ENCODE measurements at regions of chr17 and their contacts with region 1.

Region 1: GRCh38 chr17:42221937-42222745 is 27.8 kb upstream of the GHDC start:
- DNase-seq: peak; percentile 69
- ATAC-seq: peak; percentile 82
- H3K4me3 Mint-ChIP-seq: no peak overlapping the region
- H3K27ac Mint-ChIP-seq: peak overlapping the region; percentile 26
- H3K4me1 Mint-ChIP-seq: peaks cover 2% of the 10 kb centered on the region
- H3K27me3 Mint-ChIP-seq: no peaks in the 10 kb centered on the region

Region 2: GRCh38 chr17:42183741-42184711 is 38.1 kb before region 1 on chr17:
- CTCF ChIA-PET with region 1: interaction called, 10 read pairs
- POLR2A ChIA-PET with region 1: no interaction called
- DNase-seq: peak; percentile 80
- ATAC-seq: peak; percentile 71
- H3K4me3 Mint-ChIP-seq: peak overlapping the region; percentile 82
- H3K27ac Mint-ChIP-seq: peak overlapping the region; percentile 80
- H3K4me1 Mint-ChIP-seq: peaks cover 55% of the 10 kb centered on the region
- H3K27me3 Mint-ChIP-seq: peaks cover 27% of the 10 kb centered on the region

Region 3: GRCh38 chr17:42240212-42240884 is 18.2 kb after region 1 on chr17:
- CTCF ChIA-PET with region 1: interaction called, 32 read pairs
- POLR2A ChIA-PET with region 1: no interaction called
- DNase-seq: no peak
- ATAC-seq: no peak
- H3K4me3 Mint-ChIP-seq: no peak overlapping the region
- H3K27ac Mint-ChIP-seq: no peak overlapping the region
- H3K4me1 Mint-ChIP-seq: peaks cover 9% of the 10 kb centered on the region
- H3K27me3 Mint-ChIP-seq: no peaks in the 10 kb centered on the region

Region 4: DNA sequence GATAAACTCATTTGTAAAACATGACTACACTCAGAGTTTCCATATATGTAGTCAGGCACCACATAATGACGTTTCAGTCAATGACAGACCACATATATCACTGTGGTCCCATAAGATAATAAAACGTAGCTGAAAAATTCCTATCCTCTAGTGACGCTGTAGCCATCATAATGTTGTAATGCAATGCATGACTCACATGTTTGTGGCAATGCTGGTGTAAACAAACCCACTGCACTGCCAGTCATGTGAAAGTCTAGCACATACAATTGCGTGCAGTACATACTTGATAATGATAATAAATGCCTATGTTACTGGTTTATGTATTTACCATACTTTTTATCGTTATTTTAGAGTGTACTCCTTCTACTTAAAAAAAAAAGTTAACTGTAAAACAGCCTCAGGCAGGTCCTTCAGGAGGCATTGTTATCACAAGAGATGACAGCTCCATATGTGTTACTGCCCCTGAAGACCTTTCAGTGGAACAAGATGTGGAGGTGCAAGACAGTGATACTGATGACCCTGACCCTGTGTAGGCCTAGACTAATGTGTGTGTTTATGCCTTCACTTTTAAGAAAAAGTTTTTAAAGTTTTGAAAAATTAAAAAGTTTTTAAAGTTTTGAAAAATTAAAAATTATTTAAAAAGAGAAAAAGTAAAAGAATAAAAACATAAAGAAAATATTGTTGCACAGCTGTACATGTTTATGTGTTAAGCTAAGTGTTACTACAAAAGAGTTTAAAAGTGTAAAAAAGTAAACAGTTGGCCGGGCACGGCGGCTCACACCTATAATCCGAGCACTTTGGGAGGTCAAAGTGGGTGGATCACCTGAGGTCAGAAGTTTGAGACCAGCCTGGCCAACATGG is 45.0 kb after region 1 on chr17:
- CTCF ChIA-PET with region 1: interaction called, 35 read pairs
- POLR2A ChIA-PET with region 1: no interaction called
- DNase-seq: peak; percentile 55
- ATAC-seq: peak; percentile 81
- H3K4me3 Mint-ChIP-seq: no peak overlapping the region
- H3K27ac Mint-ChIP-seq: peak overlapping the region; percentile 73
- H3K4me1 Mint-ChIP-seq: peaks cover 54% of the 10 kb centered on the region
- H3K27me3 Mint-ChIP-seq: no peaks in the 10 kb centered on the region

Region 5: DNA sequence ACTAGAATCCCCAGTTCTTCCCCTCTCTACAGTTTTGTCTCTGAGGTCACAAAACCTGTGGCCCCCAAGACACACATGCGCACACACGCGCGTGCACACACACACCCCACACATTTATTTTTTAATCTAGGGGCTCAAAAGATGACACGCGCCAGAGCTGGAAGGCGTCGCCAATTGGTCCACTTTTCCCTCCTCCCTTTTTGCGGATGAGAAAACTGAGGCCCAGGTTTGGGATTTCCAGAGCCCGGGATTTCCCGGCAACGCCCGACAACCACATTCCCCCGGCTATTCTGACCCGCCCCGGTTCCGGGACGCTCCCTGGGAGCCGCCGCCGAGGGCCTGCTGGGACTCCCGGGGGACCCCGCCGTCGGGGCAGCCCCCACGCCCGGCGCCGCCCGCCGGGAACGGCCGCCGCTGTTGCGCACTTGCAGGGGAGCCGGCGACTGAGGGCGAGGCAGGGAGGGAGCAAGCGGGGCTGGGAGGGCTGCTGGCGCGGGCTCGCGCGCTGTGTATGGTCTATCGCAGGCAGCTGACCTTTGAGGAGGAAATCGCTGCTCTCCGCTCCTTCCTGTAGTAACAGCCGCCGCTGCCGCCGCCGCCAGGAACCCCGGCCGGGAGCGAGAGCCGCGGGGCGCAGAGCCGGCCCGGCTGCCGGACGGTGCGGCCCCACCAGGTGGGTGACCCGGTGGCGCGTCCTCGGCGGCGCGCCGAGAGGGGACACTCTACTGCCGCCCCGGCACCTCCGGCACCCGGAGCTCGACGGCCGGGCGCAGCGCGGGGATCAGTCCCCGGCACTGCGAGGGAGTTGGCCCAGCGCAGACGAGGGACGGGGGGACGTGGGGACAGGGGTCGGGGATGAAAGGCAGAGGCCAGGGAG is 66.0 kb after region 1 on chr17 and contains the start of gene STAT5A:
- CTCF ChIA-PET with region 1: interaction called, 54 read pairs
- POLR2A ChIA-PET with region 1: interaction called, 24 read pairs
- DNase-seq: peak; percentile 90
- ATAC-seq: peak; percentile 83
- H3K4me3 Mint-ChIP-seq: peak within 1 kb of the TSS; percentile 89
- H3K27ac Mint-ChIP-seq: peak within 1 kb of the TSS; percentile 93
- H3K4me1 Mint-ChIP-seq: peaks cover 52% of the 10 kb centered on the region
- H3K27me3 Mint-ChIP-seq: no peaks in the 10 kb centered on the region
- total RNA-seq, gene STAT5A: 117 to 119 TPM

Region 6: DNA sequence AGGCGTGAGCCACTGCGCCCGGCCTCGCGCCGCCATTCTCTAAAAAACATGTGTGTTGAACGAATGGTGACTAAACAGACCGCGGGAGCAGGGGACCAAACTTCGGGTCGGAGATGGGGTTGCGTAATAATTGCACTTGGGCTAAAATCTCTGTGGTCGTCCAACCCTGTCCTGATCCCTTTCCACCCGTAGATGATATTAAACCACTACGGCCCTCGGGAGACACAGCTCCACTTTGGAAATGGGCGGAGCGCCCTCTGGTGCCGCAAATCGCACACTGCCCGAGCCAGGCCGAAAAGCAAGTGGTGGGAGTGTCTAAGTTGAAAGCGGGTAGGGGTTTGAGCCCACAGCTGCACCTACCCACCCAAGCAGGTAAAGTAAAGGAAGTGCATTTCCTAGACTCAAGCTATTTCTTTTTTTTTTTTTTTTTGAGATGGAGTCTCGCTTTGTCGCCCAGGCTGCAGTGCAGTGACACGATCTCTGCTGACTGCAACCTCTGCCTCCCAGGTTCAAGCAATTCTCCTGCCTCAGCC is 183.9 kb after region 1 on chr17:
- CTCF ChIA-PET with region 1: interaction called, 62 read pairs
- POLR2A ChIA-PET with region 1: no interaction called
- DNase-seq: peak; percentile 85
- ATAC-seq: peak; percentile 77
- H3K4me3 Mint-ChIP-seq: no peak overlapping the region
- H3K27ac Mint-ChIP-seq: no peak overlapping the region
- H3K4me1 Mint-ChIP-seq: peaks cover 21% of the 10 kb centered on the region
- H3K27me3 Mint-ChIP-seq: no peaks in the 10 kb centered on the region

Measured in activated CD8-positive, alpha-beta T cell treated with anti-CD3 and anti-CD28 coated beads, Interleukin-2, amount 10 ng/mL, durations not matched to agents 7 days and 5 days (primary cell).